GM10248 (cell line): ENCODE measurements at regions of chr1 and their contacts with region 1.

Region 1: GRCh38 chr1:18913065-18913835 is 10.9 kb upstream of the ALDH4A1 start:
- DNase-seq: peak; percentile 91
- CTCF ChIP-seq: peak; percentile 98

Region 2: DNA sequence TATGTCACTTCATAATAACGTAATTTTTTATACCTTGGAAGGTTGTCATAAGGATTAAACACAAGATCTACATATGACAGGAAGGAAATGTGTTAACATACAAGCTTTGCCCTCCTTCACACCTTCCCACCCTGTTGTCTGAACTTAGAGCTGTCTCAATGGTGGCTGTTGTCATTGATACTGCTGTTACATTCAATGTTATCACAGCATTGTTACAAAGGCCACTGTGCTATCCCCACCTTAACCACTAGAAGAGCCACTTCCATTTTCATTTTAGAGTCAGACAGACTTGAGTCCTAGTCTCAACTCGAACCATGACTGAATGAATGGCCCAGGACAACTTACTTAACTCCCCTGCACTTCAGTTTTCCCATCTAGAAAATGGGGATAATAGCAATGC is 85.0 kb before region 1 on chr1:
- CTCF ChIA-PET with region 1: no interaction called
- POLR2A ChIA-PET with region 1: no interaction called
- DNase-seq: no peak
- CTCF ChIP-seq: no peak

Region 3: DNA sequence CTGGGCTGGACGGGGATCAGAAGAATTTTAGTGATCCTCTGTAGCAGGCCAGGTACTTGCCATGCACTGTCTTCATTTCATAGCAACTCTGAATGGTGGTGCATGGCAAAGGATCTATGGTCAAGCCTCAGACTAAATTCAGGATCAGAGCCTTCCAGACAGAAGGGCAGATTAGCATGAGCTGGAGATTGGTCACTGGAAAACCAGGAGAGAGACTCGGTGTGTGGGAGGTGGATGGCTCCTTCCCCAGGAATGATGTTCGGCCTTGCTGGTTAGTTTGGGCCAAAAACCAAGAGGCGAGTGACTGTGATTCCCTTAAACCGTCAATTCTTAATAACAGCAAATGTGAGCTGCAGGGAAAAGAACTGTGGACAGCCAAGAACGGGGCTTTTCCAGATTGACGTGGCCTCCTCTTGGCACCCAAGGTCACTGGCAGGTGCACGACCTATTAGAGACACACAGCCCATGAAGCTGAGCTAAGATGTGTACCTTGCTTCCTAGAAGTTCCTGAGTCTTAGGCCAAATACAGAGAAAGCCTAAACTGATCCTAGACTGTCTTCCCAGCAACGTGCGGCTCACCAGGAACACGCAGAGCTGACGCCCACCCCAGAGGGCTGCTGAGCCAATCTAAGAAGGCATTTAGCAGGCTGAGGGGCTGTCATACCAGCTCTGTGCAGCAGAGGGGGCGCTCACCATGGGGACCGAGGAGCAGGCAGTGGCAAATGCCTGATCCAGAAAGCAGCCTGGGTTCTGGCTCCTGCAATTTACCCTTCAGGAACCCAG is 29.4 kb before region 1 on chr1:
- CTCF ChIA-PET with region 1: interaction called, 25 read pairs
- POLR2A ChIA-PET with region 1: no interaction called
- DNase-seq: peak; percentile 77
- CTCF ChIP-seq: peak; percentile 90

Region 4: GRCh38 chr1:18926315-18927081 is 13.2 kb after region 1 on chr1:
- CTCF ChIA-PET with region 1: interaction called, 101 read pairs
- POLR2A ChIA-PET with region 1: no interaction called
- DNase-seq: peak; percentile 93
- CTCF ChIP-seq: no peak

Region 5: GRCh38 chr1:18941221-18942141 is 28.2 kb after region 1 on chr1:
- CTCF ChIA-PET with region 1: interaction called, 18 read pairs
- POLR2A ChIA-PET with region 1: no interaction called
- DNase-seq: no peak
- CTCF ChIP-seq: no peak

Region 6: DNA sequence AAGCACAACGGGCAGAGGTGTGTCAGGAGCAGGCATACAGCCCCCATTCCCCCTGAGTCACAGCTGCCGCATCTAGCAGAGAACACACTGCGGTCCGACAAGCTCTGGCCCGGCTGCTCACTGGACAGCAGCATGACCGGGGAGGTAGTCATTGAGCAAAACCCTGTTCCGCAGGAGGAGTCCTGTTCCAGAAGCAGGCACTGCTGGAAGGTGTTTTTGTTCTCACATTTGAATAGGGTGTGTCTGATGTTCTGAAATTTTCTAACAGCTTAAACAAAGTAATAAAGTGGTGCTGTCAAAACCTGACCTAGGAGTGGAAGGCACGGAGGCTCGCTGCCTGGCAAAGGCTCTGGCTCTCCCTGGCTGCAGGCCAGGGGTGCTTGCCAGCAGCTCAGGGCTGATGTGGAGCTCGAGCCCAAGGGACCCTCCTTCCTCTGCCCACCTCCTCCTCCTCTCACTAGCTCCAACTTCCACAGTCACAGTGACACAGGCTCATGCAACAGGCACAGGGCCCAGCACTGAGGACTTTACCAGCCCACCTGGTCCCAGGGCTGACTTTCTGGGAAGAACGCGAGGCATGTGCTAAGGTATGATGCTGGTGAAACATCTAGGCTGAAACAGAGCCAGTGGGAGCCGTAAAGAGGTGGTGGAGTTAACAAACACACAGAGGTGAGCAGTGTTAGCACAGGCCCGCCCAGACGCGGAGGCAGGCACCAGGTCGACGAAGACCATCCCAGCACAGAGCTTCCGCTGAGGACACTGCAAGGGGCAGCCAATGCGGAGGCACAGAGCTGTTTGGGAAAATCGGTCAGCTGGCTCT is 161.9 kb after region 1 on chr1:
- CTCF ChIA-PET with region 1: interaction called, 13 read pairs
- POLR2A ChIA-PET with region 1: no interaction called
- DNase-seq: no peak
- CTCF ChIP-seq: no peak